Activated CD4-positive, alpha-beta T cell treated with anti-CD3 and anti-CD28 coated beads, Interleukin-2, amount 10 ng/mL, durations not matched to agents 24 days and 14 days (primary cell): ENCODE measurements at regions of chr3 and their contacts with region 1.

Region 1: GRCh38 chr3:120095226-120095978 is 1.2 kb upstream of the GSK3B start:
- DNase-seq: peak; percentile 97
- H3K4me3 Mint-ChIP-seq: no peak overlapping the region
- H3K27ac Mint-ChIP-seq: no peak overlapping the region
- H3K4me1 Mint-ChIP-seq: peaks cover 15% of the 10 kb centered on the region
- H3K27me3 Mint-ChIP-seq: no peaks in the 10 kb centered on the region

Region 2: DNA sequence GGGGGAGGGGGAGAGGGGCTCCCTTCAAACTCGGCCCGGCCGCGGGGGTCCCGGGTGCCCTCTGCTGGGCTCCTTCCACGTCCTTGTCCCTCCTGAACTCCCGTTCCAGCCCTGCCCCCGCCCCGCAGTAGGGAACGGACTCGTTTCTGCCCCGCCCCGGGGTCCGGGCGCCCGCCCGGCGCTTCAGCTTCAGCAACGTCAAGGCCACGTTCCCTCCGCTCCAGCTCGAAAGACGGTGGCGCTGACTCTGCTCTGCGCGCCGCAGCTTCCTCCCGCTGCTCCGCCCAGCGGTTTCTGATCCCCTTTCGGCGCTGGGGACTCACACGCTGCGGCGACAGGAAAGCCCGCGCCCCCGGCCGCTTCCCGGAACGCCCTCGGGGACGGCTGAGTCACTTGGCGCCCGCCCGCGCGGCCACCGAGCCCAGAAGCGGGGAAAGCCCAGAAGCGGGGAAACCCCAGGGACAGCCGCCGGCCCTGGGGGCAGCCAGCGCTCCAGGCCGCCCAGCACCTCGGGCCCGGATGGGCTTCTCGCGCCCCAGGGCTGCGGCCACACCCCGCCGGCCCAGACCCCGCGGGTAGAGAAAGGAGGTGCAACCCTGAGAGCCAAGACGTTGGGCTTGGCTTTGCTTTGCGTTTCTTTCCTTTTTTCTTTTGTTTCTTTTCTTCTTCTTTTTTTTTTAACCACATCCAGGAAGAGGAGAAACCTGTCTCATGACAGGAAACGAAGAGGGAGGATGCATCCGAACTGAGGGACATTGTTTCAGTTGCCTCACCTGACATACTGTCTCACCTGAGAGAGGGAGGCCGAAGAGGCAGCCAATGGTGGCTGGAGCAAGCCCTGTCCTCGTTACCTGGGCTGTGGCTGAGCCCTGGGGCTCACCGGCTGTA is 772.3 kb before region 1 on chr3:
- intact Hi-C with region 1: loop called (anchors 10 kb)
- DNase-seq: peak; percentile 97
- H3K4me3 Mint-ChIP-seq: peak overlapping the region; percentile 82
- H3K27ac Mint-ChIP-seq: peak overlapping the region; percentile 93
- H3K4me1 Mint-ChIP-seq: peaks cover 38% of the 10 kb centered on the region
- H3K27me3 Mint-ChIP-seq: peaks cover 25% of the 10 kb centered on the region

Region 3: DNA sequence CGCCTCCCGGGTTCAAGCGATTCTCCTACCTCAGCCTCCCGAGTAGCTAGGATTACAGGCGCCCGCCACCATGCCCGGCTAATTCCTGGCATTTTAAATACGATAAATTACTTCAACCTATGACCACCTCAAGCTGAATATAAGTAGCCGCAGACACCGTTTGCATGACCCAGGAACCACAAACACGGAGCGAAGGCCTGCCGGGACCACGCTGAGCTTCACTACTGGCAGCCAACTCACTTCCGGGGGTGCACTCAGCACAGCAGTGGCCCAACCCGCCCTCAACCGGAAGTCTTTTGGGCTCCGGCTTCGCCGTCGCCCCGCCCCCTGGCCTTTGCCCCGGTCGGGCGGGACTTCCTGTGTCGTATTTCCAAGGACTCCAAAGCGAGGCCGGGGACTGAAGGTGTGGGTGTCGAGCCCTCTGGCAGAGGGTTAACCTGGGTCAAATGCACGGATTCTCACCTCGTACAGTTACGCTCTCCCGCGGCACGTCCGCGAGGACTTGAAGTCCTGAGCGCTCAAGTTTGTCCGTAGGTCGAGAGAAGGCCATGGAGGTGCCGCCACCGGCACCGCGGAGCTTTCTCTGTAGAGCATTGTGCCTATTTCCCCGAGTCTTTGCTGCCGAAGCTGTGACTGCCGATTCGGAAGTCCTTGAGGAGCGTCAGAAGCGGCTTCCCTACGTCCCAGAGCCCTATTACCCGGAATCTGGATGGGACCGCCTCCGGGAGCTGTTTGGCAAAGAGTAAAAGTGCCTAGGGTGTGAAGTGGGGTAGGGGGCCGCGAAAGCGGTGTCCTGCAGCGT is 597.0 kb before region 1 on chr3 and contains the start of gene TIMMDC1:
- intact Hi-C with region 1: loop called (anchors 1 kb)
- DNase-seq: peak; percentile 99
- H3K4me3 Mint-ChIP-seq: peak within 1 kb of the TSS; percentile 99
- H3K27ac Mint-ChIP-seq: peak within 1 kb of the TSS; percentile 99
- H3K4me1 Mint-ChIP-seq: peaks cover 23% of the 10 kb centered on the region
- H3K27me3 Mint-ChIP-seq: no peaks in the 10 kb centered on the region
- total RNA-seq, gene TIMMDC1: 113 and 117 TPM in 2 replicates

Region 4: DNA sequence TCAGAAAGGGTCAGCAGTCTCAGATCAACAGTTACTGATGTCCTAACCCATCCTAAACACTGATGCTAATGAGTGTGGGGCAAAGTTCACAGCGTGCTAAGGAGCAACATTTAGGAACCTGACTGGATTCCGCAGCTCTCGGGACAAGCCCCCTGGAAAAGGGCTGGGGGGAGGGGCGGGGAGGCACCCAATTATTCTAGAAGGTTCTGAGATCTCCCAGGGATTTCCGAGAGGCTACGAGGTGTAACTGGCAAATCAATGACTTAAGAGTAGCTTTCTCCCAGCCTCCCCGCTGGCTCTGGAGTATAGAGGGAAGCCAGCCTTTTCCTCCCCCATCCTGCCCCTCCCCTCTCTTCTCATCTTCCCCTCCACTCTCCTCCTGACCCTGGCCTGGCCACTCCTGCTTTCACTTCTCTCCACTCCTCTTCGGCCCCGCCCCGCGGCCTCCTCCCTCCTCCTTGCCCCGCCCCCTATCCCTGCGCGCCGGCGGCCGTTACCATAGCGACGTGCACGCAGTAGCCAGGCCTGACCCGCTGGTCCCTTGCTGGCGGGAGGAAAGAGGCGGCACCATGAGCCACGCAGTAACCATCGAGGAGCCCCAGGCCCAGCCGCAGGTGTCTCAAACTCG is 392.8 kb before region 1 on chr3 and contains the start of gene CFAP91:
- intact Hi-C with region 1: loop called (anchors 5 kb)
- DNase-seq: peak; percentile 94
- H3K4me3 Mint-ChIP-seq: peak within 1 kb of the TSS; percentile 83
- H3K27ac Mint-ChIP-seq: peak within 1 kb of the TSS; percentile 40
- H3K4me1 Mint-ChIP-seq: peaks cover 29% of the 10 kb centered on the region
- H3K27me3 Mint-ChIP-seq: peaks cover 27% of the 10 kb centered on the region
- total RNA-seq, gene CFAP91: 0.26 TPM in 1 of 2 replicates, not detected in the other

Region 5: DNA sequence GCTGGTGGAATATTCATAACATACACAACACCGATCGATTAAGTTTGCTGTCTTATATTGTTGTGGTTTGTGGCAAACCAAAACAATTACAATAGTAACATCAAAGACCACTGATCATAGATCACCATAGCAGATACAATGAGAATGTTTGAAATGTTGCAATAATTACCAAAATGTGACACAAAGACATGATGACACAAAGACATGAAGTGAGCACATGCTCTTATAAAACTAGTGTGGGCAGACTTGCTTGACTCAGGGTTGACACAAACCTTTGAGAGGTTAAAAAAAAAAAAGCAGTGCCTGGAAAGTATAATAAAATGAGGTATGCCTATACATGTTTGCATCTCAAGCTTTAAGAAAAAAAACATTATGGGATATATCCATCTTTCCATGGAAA is 183.2 kb before region 1 on chr3:
- intact Hi-C with region 1: loop called (anchors 1 kb)
- DNase-seq: no peak
- H3K4me3 Mint-ChIP-seq: peak overlapping the region; percentile 49
- H3K27ac Mint-ChIP-seq: peak overlapping the region; percentile 79
- H3K4me1 Mint-ChIP-seq: peaks cover 20% of the 10 kb centered on the region
- H3K27me3 Mint-ChIP-seq: no peaks in the 10 kb centered on the region

Region 6: DNA sequence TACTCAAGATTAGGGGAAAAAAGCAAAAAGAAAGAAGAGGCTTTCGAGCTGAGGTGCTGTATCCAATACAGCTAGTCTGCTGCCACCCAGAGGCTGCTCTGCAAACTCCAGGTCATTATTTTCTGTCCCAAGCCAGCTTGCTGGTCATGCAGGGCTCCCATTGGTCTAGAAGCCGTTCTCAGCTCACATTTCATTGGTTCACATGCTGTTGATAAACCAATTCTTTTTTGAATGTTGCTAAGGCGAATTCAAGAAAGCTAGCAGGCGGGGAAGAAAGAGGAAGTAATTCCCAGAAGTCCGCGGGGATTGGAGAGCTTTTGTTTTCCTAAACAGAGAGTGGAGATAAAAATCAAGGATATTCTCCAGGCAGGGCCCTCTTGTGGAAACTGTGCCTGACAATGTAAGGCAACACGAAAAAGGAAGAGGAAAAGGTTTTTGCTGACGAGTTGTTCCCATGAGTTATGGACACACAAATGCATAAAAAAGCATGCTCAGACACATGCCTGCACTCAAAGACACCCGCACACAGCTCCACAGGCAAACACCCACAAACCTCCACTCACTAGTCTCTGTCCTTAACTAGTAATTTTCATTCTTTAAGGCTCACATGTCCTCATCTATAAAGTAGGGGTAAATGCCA is 322.0 kb after region 1 on chr3:
- intact Hi-C with region 1: loop called (anchors 5 kb)
- DNase-seq: peak; percentile 95
- H3K4me3 Mint-ChIP-seq: peak overlapping the region; percentile 90
- H3K27ac Mint-ChIP-seq: peak overlapping the region; percentile 46
- H3K4me1 Mint-ChIP-seq: peaks cover 14% of the 10 kb centered on the region
- H3K27me3 Mint-ChIP-seq: peaks cover 5% of the 10 kb centered on the region